CD14-positive monocyte (primary cell): ENCODE measurements at regions of chr6 and their contacts with region 1.

Region 1: DNA sequence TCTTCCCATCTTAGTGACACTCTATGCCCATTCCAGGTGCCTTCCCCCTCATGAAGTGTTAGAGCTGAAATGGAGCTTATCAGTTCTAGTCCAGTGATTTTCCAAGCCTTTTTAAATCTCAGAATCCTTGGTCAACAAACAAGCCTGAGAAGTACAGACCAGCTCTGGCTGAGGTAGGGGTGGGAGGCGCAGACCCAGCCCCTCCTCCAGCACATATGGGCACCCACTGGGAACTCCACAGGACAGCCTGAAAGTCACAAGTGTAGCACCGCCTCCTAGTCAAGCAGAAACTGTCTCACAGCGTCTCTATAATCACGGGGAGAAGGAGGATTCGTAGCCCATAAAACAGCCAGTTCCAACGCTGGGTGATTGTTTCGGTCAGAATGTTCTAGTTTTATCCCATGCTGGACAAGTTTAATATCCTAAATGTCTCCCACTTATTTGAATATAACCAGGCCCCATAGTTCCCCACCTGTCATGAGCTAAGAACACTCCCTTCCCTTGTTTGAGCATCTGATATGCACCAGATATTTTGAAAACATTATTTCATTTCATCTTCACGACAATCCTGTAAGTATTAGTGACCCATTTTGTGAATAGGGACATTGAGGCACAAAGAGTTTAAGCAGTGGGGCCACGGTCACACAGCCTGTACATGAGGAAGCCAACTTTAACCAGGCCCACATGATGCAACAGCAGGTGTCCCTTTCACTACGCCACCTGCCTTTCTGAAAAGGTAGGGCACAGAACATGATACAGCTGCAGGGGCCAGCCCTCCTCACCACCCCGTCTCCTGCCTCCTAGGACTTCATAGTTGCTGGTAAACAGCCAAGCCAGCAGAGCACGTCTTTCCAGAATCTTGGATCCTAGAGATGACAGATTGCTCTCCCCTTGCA is 40.1 kb downstream of the TRAF3IP2 start:
- DNase-seq: no peak
- H3K4me3 ChIP-seq: no peak overlapping the region
- H3K4me3 Mint-ChIP-seq: no peak overlapping the region
- H3K27ac ChIP-seq: no peak overlapping the region
- H3K27ac Mint-ChIP-seq: peak overlapping the region in 1 of 7 donors; percentile 7
- H3K4me1 ChIP-seq: peaks cover 12 to 15% of the 10 kb centered on the region in 2 donors
- H3K4me1 Mint-ChIP-seq: peaks cover 21% of the 10 kb centered on the region
- H3K27me3 ChIP-seq: no peaks in the 10 kb centered on the region
- H3K27me3 Mint-ChIP-seq: no peaks in the 10 kb centered on the region
- CTCF ChIP-seq: no peak

Region 2: GRCh38 chr6:111230351-111231089 is 335.1 kb before region 1 on chr6:
- intact Hi-C with region 1: no loop called
- DNase-seq: peak; percentile 65 to 86 (median 68)
- H3K4me3 ChIP-seq: peak overlapping the region in 2 of 3 experiments; percentile 5 to 31
- H3K4me3 Mint-ChIP-seq: peak overlapping the region; percentile 37 to 62
- H3K27ac ChIP-seq: peak overlapping the region; percentile 74 to 86
- H3K27ac Mint-ChIP-seq: peak overlapping the region; percentile 86 to 97 (median 94)
- H3K4me1 ChIP-seq: peaks cover 26 to 35% of the 10 kb centered on the region in 2 donors
- H3K4me1 Mint-ChIP-seq: peaks cover 30% of the 10 kb centered on the region
- H3K27me3 ChIP-seq: no peaks in the 10 kb centered on the region
- H3K27me3 Mint-ChIP-seq: peaks cover 0 to 3% (median 0%) of the 10 kb centered on the region in 3 donors
- CTCF ChIP-seq: no peak

Region 3: DNA sequence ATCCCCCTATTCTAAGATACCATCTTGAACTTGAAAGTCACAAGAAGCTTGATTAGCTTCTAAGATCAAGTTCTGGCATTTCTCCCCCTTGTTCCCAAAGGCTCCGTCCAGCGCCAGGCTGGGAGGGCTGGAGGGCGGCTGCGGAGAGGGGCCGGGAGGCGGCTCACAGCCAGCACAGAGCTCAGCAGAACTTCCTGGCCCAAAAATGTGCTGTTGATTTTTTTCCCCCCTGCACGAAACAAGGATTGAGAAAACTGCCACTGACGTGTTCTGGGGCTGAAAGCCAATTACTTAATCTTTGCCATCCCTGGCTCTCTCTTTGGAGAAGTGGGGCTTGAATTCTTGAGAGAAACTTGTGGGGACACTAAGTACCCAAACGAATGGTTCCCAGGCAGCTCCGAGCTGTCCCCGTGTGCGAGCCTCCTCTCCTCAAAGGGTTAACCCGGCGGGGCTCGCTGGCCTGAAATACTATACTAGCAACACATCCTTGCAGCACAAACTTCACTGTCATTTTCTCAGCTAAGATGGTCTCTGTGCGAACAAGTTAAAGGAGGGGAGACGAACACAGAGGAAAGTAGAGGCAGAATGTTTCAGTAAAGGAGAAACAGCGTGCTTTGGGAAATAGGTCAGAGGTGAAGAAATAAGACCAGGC is 39.7 kb after region 1 on chr6:
- intact Hi-C with region 1: loop called in 1 of 2 experiments (anchors 5 kb)
- DNase-seq: peak; percentile 72 to 85 (median 81)
- H3K4me3 ChIP-seq: peak overlapping the region; percentile 42 to 87 (median 81)
- H3K4me3 Mint-ChIP-seq: peak overlapping the region; percentile 89 to 98
- H3K27ac ChIP-seq: peak overlapping the region; percentile 85 to 96
- H3K27ac Mint-ChIP-seq: peak overlapping the region; percentile 93 to 99 (median 98)
- H3K4me1 ChIP-seq: peaks cover 47 to 50% of the 10 kb centered on the region in 2 donors
- H3K4me1 Mint-ChIP-seq: peaks cover 53% of the 10 kb centered on the region
- H3K27me3 ChIP-seq: no peaks in the 10 kb centered on the region
- H3K27me3 Mint-ChIP-seq: peaks cover 0 to 2% (median 0%) of the 10 kb centered on the region in 3 donors
- CTCF ChIP-seq: no peak